Caco-2 (cell line): ENCODE measurements at regions of chr6 and their contacts with region 1.

Region 1: DNA sequence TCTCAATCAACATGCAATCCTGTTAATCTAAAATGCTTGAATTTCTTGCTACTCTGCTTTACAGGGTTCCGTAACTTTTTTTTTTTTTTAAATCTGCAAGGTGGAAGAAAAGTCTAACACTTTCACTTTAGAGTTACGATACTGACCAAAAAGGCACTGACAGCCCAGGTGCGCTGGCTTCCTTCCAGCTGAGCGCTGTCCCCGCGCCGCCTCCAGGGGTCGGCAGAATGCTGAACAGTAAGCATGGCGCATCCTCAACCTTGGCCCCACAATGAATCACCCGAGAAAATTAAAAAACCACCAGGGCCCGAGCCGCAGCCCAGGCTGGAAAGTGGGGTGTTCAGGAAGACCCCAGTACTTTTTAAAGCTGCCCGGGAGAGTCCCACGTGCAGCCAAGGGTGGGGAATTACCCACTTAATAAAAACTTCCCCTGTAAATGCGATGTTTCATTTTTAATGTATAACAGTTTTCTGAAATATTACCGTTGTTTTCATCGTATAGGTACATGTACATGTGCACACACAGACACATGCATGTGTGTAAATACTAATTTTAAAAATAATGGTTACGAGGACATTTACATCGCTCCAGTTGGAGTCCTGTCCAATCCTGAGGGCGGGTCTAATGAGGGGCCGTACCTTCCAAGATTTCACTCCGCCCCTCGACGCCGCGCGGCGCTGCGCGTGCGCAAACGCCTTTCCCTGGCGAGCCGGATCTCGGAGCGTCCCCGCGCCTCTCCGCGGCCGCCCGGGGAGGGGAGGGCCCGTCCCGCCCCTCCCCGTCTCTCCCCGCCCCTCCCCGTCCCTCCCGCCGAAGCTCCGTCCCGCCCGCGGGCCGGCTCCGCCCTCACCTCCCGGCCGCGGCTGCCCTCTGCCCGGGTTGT is at the start of gene GINM1:
- DNase-seq: peak; percentile 94 to 97
- H3K4me3 ChIP-seq: peak within 1 kb of the TSS; percentile 99
- H3K4me3 Mint-ChIP-seq: peak within 1 kb of the TSS; percentile 79
- H3K27ac Mint-ChIP-seq: peak within 1 kb of the TSS; percentile 77
- H3K4me1 ChIP-seq: no peaks in the 10 kb centered on the region
- H3K4me1 Mint-ChIP-seq: no peaks in the 10 kb centered on the region
- H3K27me3 ChIP-seq: no peaks in the 10 kb centered on the region
- H3K27me3 Mint-ChIP-seq: no peaks in the 10 kb centered on the region
- CTCF ChIP-seq: peak; percentile 71 to 91
- total RNA-seq, gene GINM1: 29.6 and 34.9 TPM in 2 replicates

Region 2: GRCh38 chr6:149347067-149347466 is 218.7 kb before region 1 on chr6:
- CTCF ChIA-PET with region 1: interaction called, 11 read pairs
- POLR2A ChIA-PET with region 1: no interaction called
- intact Hi-C with region 1: no loop called
- DNase-seq: no peak
- H3K4me3 ChIP-seq: no peak overlapping the region
- H3K4me3 Mint-ChIP-seq: no peak overlapping the region
- H3K27ac Mint-ChIP-seq: no peak overlapping the region
- H3K4me1 ChIP-seq: no peaks in the 10 kb centered on the region
- H3K4me1 Mint-ChIP-seq: peaks cover 6% of the 10 kb centered on the region
- H3K27me3 ChIP-seq: no peaks in the 10 kb centered on the region
- H3K27me3 Mint-ChIP-seq: no peaks in the 10 kb centered on the region
- CTCF ChIP-seq: no peak

Region 3: GRCh38 chr6:149534742-149535141 is 31.0 kb before region 1 on chr6:
- CTCF ChIA-PET with region 1: no interaction called
- POLR2A ChIA-PET with region 1: no interaction called
- intact Hi-C with region 1: no loop called
- DNase-seq: no peak
- H3K4me3 ChIP-seq: no peak overlapping the region
- H3K4me3 Mint-ChIP-seq: no peak overlapping the region
- H3K27ac Mint-ChIP-seq: no peak overlapping the region
- H3K4me1 ChIP-seq: no peaks in the 10 kb centered on the region
- H3K4me1 Mint-ChIP-seq: no peaks in the 10 kb centered on the region
- H3K27me3 ChIP-seq: no peaks in the 10 kb centered on the region
- H3K27me3 Mint-ChIP-seq: no peaks in the 10 kb centered on the region
- CTCF ChIP-seq: no peak

Region 4: DNA sequence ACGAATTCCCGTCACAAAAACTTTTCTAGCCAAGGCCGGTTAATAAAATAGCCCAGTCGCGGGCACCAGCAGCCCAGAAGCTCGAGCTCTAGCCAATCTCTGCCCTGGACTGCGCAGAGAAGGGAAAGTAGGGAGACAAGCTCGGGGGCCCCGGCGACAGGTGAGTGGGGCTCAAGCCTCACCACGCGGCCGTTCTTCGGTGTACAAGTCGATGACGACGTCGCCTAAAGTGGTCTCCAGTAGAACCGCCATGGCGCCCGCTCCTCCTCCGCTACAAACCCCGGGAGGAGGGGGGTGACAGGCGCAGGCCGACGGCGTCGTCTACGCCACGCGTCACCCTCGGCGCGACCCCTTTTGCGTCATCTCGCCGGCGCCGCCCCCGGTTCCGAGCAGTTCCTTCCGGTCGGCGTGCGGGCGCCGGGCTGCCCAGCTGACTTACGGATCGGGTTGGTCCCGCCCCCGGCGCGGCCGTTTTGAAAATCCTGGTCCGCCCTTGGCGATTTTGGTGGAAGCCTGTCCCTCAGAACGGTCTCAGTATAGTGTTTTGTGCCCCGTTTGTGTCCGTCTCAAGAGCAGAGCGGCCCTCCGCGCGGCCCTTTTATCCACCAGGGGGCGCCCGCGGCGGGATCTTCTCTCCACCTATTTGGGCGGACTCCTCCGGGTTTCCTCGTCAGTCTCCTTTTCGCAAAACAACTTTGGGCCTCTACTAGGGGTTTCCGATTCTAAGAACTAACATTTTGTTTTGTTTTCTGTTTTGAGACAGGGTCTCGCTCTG is 19.8 kb before region 1 on chr6 and contains the start of gene PPIL4:
- CTCF ChIA-PET with region 1: interaction called, 5 read pairs
- POLR2A ChIA-PET with region 1: interaction called, 6 read pairs
- intact Hi-C with region 1: loop called (anchors 1 kb)
- DNase-seq: peak; percentile 93 to 96
- H3K4me3 ChIP-seq: peak within 1 kb of the TSS; percentile 61
- H3K4me3 Mint-ChIP-seq: peak within 1 kb of the TSS; percentile 81
- H3K27ac Mint-ChIP-seq: peak within 1 kb of the TSS; percentile 98
- H3K4me1 ChIP-seq: no peaks in the 10 kb centered on the region
- H3K4me1 Mint-ChIP-seq: peaks cover 16% of the 10 kb centered on the region
- H3K27me3 ChIP-seq: no peaks in the 10 kb centered on the region
- H3K27me3 Mint-ChIP-seq: no peaks in the 10 kb centered on the region
- CTCF ChIP-seq: peak; percentile 91 to 93
- total RNA-seq, gene PPIL4: 28.3 and 28.4 TPM in 2 replicates

Region 5: GRCh38 chr6:149593443-149593842 is 27.7 kb after region 1 on chr6:
- CTCF ChIA-PET with region 1: interaction called, 13 read pairs
- POLR2A ChIA-PET with region 1: no interaction called
- intact Hi-C with region 1: no loop called
- DNase-seq: no peak
- H3K4me3 ChIP-seq: no peak overlapping the region
- H3K4me3 Mint-ChIP-seq: no peak overlapping the region
- H3K27ac Mint-ChIP-seq: no peak overlapping the region
- H3K4me1 ChIP-seq: no peaks in the 10 kb centered on the region
- H3K4me1 Mint-ChIP-seq: no peaks in the 10 kb centered on the region
- H3K27me3 ChIP-seq: no peaks in the 10 kb centered on the region
- H3K27me3 Mint-ChIP-seq: no peaks in the 10 kb centered on the region
- CTCF ChIP-seq: no peak

Region 6: GRCh38 chr6:149648148-149649145 is 82.7 kb after region 1 on chr6 and contains the start of gene KATNA1:
- CTCF ChIA-PET with region 1: interaction called, 13 read pairs
- POLR2A ChIA-PET with region 1: interaction called, 4 read pairs
- intact Hi-C with region 1: loop called (anchors 1 kb)
- DNase-seq: peak; percentile 95 to 96
- H3K4me3 ChIP-seq: peak within 1 kb of the TSS; percentile 68
- H3K4me3 Mint-ChIP-seq: peak within 1 kb of the TSS; percentile 84
- H3K27ac Mint-ChIP-seq: peak within 1 kb of the TSS; percentile 73
- H3K4me1 ChIP-seq: 0 out of 2 replicates have a peak, but pooled peaks cover 10% of the 10 kb centered on the region
- H3K4me1 Mint-ChIP-seq: no peaks in the 10 kb centered on the region
- H3K27me3 ChIP-seq: no peaks in the 10 kb centered on the region
- H3K27me3 Mint-ChIP-seq: no peaks in the 10 kb centered on the region
- CTCF ChIP-seq: no peak
- total RNA-seq, gene KATNA1: 16.7 and 19.2 TPM in 2 replicates

Region 7: DNA sequence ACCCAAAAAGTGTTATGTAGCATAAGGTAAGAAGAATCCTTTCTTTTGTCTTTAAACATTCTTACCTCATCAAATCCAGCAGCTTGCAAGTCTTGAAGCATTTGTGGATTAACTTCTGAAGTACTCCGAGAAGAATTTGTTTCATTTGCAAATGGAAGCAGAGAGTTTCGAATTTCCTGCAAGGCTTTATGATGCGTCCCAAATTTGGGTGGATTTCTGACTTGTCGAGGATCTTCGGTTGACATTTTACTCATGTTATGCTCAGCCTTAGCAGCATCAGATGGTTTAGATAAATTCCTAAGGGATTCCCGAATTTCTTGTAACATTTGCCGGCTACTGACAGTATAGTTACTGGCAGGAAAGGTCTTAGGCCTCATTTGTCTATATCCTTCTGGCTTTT is 135.9 kb after region 1 on chr6:
- CTCF ChIA-PET with region 1: no interaction called
- POLR2A ChIA-PET with region 1: no interaction called
- intact Hi-C with region 1: loop called (anchors 5 kb)
- DNase-seq: no peak
- H3K4me3 ChIP-seq: no peak overlapping the region
- H3K4me3 Mint-ChIP-seq: no peak overlapping the region
- H3K27ac Mint-ChIP-seq: no peak overlapping the region
- H3K4me1 ChIP-seq: no peaks in the 10 kb centered on the region
- H3K4me1 Mint-ChIP-seq: no peaks in the 10 kb centered on the region
- H3K27me3 ChIP-seq: no peaks in the 10 kb centered on the region
- H3K27me3 Mint-ChIP-seq: no peaks in the 10 kb centered on the region
- CTCF ChIP-seq: no peak

Region 8: DNA sequence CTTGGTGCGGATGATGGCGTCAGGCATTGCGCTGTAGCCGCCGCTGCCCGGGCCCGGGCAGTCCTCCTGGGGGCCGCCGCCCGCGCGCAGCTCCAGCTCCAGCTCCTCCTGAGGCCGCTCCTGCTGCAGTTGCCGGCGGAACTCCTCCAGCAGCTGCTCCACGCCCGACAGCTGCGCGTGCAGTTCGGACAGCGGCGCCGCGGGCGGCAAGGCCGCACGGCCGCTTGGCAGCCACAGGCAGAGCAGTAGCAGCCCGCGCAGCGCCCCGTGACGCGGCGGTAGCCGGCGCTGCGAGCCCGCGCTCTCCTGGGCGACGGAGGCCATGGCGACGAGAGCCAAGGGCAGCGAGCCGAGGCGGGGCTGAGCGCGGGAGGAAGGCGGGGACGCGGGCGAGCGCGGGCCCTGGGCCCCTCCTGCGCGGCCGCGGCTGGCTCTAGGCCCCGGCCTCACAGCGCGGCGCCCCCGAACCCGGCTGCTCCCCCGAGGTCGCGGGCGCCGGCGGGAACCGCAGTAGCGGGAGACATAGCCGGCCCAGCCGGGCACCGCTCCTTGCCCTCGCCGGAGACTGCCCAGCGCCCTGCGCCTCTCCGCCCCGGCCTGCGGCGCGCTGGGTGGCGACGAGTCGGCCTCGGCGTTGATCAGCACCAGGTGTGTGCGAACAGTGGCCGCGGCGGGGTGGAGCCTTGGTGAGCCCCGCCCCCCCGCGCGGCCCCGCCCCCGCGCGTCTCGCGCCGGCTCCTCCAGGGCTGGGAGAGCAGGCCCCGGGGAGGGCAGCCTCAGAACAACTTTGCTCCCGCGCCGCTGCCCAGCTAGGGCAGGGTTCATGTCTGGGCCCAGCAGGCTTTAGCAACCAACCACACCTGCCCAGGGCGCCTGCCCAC is 298.2 kb after region 1 on chr6 and contains the start of gene LRP11:
- CTCF ChIA-PET with region 1: interaction called, 4 read pairs
- POLR2A ChIA-PET with region 1: no interaction called
- intact Hi-C with region 1: loop called (anchors 10 kb)
- DNase-seq: peak; percentile 83 to 92
- H3K4me3 ChIP-seq: peak within 1 kb of the TSS; percentile 75
- H3K4me3 Mint-ChIP-seq: peak within 1 kb of the TSS; percentile 86
- H3K27ac Mint-ChIP-seq: peak within 1 kb of the TSS; percentile 71
- H3K4me1 ChIP-seq: peaks cover 8% of the 10 kb centered on the region
- H3K4me1 Mint-ChIP-seq: peaks cover 28% of the 10 kb centered on the region
- H3K27me3 ChIP-seq: no peaks in the 10 kb centered on the region
- H3K27me3 Mint-ChIP-seq: no peaks in the 10 kb centered on the region
- CTCF ChIP-seq: no peak
- total RNA-seq, gene LRP11: 17.7 and 18.4 TPM in 2 replicates